ENCODE measurements at regions of chr19 and their contacts with region 1.

Region 1: DNA sequence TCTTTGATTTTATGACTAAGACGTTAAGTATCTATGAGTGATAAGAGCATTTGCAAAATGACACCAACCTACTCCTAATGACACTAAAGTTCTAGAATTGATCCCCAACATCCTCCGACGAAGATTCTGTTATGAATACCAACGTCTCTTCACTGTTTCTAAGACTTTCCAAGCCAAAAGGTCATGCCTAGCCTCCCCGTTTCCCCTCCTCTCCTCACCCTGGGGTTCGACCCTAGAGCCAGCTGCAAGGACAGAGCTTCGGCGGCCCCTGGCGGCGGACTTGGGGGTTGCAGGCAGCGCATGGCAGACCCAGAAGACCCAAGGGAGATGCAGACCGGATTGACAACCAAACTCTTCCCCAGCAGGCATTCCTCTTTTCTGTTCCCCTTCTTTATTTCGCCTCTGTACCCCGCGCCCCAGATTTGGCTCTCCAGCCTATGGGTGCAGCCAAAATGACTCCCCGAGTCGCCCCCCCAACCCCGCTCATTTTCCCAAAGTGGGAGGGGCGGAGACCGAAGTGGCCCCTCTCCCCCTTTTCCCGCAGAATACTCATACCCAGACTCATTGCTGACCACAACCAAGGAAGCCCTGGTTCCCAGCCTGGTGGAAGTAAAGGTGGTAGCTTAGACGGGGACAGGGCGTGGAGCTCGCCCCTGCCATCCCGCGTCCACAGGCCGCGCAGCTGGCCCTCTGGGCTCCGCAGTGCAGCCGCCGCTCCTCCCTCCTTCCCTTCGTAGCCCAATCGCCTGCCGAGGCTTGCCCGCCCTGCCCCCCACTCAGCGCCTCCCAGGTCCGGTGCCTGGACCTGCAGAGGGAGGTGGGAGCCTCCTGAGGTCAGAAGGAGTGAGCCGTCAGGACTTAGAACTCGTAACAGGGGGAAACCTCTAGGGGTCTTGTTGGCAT is 4.1 kb upstream of the EML2 start:
- DNase-seq: peak; percentile 86
- H3K4me3 Mint-ChIP-seq: peak overlapping the region; percentile 64
- H3K27ac Mint-ChIP-seq: peak overlapping the region; percentile 98
- H3K4me1 Mint-ChIP-seq: peaks cover 33% of the 10 kb centered on the region
- H3K27me3 Mint-ChIP-seq: no peaks in the 10 kb centered on the region

Region 2: DNA sequence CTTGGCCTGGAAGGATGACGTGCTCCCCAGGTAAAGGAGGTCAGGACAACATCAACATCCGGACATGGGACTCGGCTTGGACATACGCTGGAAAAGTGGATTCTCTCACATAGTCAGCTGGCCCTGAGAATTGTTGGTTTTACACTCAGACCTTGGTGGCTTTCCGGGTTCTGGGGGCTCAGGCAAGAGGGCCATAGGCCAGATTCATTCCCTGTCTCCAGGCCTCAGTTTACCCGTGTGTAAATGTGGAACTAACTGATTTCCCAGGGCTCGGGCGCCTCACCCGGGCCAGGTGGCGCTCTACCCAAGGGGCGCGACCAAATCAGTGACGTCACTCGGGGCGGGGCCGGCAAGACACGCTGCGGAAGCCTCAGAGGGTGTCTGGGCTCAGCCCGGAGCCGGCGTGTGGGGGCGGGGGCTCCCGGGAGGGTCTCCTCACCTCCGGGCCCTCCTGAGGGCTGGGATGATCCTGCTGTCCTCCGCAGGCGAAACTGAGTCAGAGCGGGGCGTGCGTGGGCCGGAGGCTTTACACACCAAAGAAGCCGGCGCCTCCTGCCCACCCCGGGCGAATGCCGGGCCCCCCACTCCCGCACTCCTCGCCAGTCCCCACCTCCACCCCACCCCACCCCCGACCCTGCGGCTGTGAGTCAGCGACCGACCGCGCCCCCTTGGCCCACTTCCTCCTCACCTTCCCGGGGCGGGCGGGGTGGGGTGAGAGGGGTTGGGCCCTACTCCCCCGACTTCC is 136.9 kb before region 1 on chr19:
- intact Hi-C with region 1: loop called (anchors 1 kb)
- DNase-seq: peak; percentile 95
- H3K4me3 Mint-ChIP-seq: peak overlapping the region; percentile 93
- H3K27ac Mint-ChIP-seq: peak overlapping the region; percentile 95
- H3K4me1 Mint-ChIP-seq: peaks cover 27% of the 10 kb centered on the region
- H3K27me3 Mint-ChIP-seq: no peaks in the 10 kb centered on the region

Region 3: GRCh38 chr19:45584332-45585157 is 58.7 kb before region 1 on chr19 and contains the start of gene OPA3:
- intact Hi-C with region 1: loop called (anchors 1 kb)
- DNase-seq: peak; percentile 98
- H3K4me3 Mint-ChIP-seq: peak within 1 kb of the TSS; percentile 89
- H3K27ac Mint-ChIP-seq: peak within 1 kb of the TSS; percentile 97
- H3K4me1 Mint-ChIP-seq: peaks cover 9% of the 10 kb centered on the region
- H3K27me3 Mint-ChIP-seq: peaks cover under 1% of the 10 kb centered on the region
- total RNA-seq, gene OPA3: 15.2 and 15.9 TPM in 2 replicates

Region 4: DNA sequence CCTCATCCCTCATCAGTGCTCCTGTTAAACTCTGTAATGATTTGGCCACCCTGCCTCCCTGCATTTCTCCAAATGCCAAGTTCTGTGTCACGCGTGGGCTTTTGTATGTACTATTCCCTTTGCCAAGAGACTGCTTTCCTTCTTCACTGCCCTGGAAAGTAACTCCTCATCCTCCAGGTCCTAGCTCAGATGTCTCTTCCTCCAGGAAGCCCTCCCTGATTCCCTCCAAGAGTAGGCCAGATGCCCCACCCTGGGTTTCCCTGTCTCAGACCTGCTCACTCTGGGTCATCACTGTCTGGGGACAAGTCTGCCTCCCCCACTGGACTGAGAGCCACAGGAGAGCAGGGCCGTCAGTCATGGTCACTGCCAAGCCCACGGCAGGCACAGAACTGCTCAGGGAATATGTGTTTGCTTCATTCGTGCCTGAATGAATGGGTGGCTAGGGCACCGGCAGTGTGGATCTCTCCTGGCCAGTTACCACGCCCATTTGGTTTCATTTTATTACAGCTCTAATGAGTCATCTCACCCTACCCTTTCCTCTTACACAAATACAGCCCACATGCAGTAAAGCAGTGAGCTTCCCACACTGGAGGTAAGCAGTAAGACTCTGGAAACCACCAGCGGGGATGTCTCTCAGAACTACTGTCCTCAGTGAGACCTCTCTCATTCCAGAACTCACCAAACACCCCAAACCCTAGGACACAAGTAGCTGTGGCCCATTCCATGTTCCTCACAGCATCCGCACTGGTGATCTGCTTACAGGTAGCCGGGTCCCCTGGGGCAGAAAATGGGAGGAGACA is 29.1 kb before region 1 on chr19:
- intact Hi-C with region 1: loop called (anchors 1 kb)
- DNase-seq: peak; percentile 33
- H3K4me3 Mint-ChIP-seq: peak overlapping the region; percentile 22
- H3K27ac Mint-ChIP-seq: peak overlapping the region; percentile 91
- H3K4me1 Mint-ChIP-seq: peaks cover 20% of the 10 kb centered on the region
- H3K27me3 Mint-ChIP-seq: no peaks in the 10 kb centered on the region

Region 5: DNA sequence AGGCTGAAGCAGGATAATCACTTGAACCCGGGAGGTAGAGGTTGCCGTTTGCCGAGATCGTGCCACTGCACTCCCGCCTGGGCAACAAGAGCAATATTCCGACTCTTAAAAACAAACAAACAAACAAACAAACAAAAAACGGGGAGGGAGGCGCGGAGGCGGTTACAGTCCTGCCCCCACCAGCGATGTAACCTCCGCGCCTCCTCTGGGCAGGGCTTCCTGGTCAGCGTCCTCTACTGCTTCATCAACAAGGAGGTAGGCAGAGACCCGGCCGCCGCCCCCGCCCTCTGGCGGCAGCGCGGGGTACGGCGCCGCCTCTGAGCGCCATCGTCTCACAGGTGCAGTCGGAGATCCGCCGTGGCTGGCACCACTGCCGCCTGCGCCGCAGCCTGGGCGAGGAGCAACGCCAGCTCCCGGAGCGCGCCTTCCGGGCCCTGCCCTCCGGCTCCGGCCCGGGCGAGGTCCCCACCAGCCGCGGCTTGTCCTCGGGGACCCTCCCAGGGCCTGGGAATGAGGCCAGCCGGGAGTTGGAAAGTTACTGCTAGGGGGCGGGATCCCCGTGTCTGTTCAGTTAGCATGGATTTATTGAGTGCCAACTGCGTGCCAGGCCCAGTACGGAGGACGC is 38.2 kb after region 1 on chr19:
- intact Hi-C with region 1: loop called (anchors 2 kb)
- DNase-seq: peak; percentile 86
- H3K4me3 Mint-ChIP-seq: peak overlapping the region; percentile 76
- H3K27ac Mint-ChIP-seq: peak overlapping the region; percentile 72
- H3K4me1 Mint-ChIP-seq: peaks cover 16% of the 10 kb centered on the region
- H3K27me3 Mint-ChIP-seq: peaks cover 2% of the 10 kb centered on the region

Region 6: GRCh38 chr19:45730389-45731288 is 87.4 kb after region 1 on chr19 and contains the start of gene FBXO46:
- intact Hi-C with region 1: no loop called
- DNase-seq: peak; percentile 93
- H3K4me3 Mint-ChIP-seq: peak within 1 kb of the TSS; percentile 100
- H3K27ac Mint-ChIP-seq: peak within 1 kb of the TSS; percentile 92
- H3K4me1 Mint-ChIP-seq: peaks cover 18% of the 10 kb centered on the region
- H3K27me3 Mint-ChIP-seq: no peaks in the 10 kb centered on the region
- total RNA-seq, gene FBXO46: 34.4 and 38.9 TPM in 2 replicates